Activated naive CD4-positive, alpha-beta T cell treated with anti-CD3 and anti-CD28 coated beads, Interleukin-2, amount 10 ng/mL, durations not matched to agents 7 days and 5 days (primary cell): ENCODE measurements at regions of chr2 and their contacts with region 1.

Region 1: GRCh38 chr2:234288974-234289455 is 207.9 kb downstream of the ARL4C start:
- DNase-seq: peak; percentile 82
- H3K4me3 Mint-ChIP-seq: peak overlapping the region; percentile 57
- H3K27ac Mint-ChIP-seq: peak overlapping the region; percentile 99
- H3K4me1 Mint-ChIP-seq: peaks cover 87% of the 10 kb centered on the region
- H3K27me3 Mint-ChIP-seq: no peaks in the 10 kb centered on the region

Region 2: GRCh38 chr2:234135720-234136221 is 153.2 kb before region 1 on chr2:
- CTCF ChIA-PET with region 1: interaction called, 11 read pairs
- DNase-seq: peak; percentile 66
- H3K4me3 Mint-ChIP-seq: no peak overlapping the region
- H3K27ac Mint-ChIP-seq: peak overlapping the region; percentile 34
- H3K4me1 Mint-ChIP-seq: peaks cover 27% of the 10 kb centered on the region
- H3K27me3 Mint-ChIP-seq: peaks cover 20% of the 10 kb centered on the region

Region 3: GRCh38 chr2:234308813-234309195 is 19.8 kb after region 1 on chr2:
- CTCF ChIA-PET with region 1: interaction called, 24 read pairs
- DNase-seq: peak; percentile 80
- H3K4me3 Mint-ChIP-seq: peak overlapping the region; percentile 46
- H3K27ac Mint-ChIP-seq: peak overlapping the region; percentile 97
- H3K4me1 Mint-ChIP-seq: peaks cover 59% of the 10 kb centered on the region
- H3K27me3 Mint-ChIP-seq: no peaks in the 10 kb centered on the region

Region 4: DNA sequence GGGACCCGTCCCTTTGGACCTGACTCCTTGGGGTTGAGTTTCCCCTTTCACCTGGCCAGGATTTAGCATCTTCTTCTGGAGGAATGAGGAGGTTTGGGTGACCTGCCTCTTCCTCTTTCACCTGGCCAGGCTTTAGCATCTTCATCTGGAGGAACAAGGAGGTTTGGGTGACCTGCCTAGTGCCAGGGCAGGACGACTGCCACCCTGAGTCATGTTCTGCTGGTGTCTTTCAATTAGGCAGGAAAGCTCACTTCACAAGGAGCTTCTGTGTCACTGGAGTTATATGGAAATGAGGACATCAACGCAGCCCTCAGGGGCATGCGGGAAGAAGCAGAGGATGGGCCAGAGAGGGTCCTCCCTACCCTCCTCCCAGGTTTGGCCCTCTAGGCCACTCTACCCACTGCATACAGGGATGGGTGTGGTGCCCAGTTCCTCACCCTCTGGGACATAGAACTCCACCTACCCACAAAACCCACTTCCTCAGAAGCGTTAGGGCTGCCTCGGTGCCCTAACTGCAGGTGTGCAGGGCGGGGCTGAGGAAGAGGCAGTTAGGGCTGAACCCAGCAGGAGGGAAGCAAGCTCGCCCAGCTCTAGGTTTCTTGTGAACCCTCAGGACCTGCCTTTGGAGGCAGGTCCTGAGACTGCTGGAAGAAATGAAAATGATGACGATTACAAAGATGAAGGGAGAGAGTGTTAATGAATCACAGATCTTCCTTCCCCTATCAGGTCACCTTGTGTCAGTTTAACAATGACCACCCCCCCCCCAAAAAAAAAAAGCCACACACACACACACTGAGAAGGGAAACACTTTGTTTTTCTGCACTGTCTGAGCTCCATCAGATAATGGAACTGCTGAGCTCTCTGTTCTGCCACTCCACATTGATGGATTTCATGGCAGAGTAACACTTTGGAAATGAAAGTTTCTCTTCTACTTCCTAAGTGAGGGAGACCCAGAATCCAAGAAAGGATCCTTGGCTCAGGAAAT is 136.9 kb after region 1 on chr2:
- CTCF ChIA-PET with region 1: interaction called, 12 read pairs
- DNase-seq: peak; percentile 89
- H3K4me3 Mint-ChIP-seq: peak overlapping the region; percentile 74
- H3K27ac Mint-ChIP-seq: peak overlapping the region; percentile 99
- H3K4me1 Mint-ChIP-seq: peaks cover 94% of the 10 kb centered on the region
- H3K27me3 Mint-ChIP-seq: no peaks in the 10 kb centered on the region

Region 5: GRCh38 chr2:234483568-234484251 is 194.7 kb after region 1 on chr2:
- CTCF ChIA-PET with region 1: interaction called, 32 read pairs
- DNase-seq: peak; percentile 88
- H3K4me3 Mint-ChIP-seq: peak overlapping the region; percentile 61
- H3K27ac Mint-ChIP-seq: peak overlapping the region; percentile 93
- H3K4me1 Mint-ChIP-seq: peaks cover 88% of the 10 kb centered on the region
- H3K27me3 Mint-ChIP-seq: no peaks in the 10 kb centered on the region

Region 6: DNA sequence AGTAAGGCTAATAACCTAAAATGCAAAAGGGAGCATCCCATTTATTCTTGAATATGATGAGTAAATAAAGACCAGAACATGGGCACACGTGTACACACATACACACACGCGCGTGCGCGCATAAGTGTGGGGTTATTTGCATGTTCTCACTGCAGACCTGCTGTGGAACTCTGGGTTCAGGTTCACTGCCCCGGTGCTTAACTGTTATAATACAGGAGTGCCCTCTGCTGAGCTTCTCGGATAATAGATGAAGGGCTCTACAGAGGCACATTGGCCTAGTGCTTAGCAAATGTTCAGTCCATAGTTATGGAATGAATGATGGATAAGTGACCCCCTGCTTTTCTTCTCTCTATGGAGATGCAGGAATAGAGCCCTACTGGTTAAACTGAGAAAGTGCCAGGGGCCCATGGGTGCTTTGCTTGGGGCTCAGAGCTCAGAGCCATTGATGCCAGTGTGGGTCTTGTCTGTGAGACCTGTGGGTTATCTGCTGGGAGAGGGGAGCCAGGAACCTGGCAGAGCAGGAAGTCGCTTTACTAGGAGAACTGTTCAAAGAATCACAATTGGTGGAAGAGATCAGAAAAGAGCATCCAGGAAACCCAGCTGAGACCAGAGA is 211.5 kb after region 1 on chr2:
- CTCF ChIA-PET with region 1: interaction called, 70 read pairs
- DNase-seq: peak; percentile 86
- H3K4me3 Mint-ChIP-seq: peak overlapping the region; percentile 47
- H3K27ac Mint-ChIP-seq: peak overlapping the region; percentile 89
- H3K4me1 Mint-ChIP-seq: peaks cover 33% of the 10 kb centered on the region
- H3K27me3 Mint-ChIP-seq: peaks cover 24% of the 10 kb centered on the region